Caco-2 (cell line): ENCODE measurements at regions of chr11 and their contacts with region 1.

Region 1: DNA sequence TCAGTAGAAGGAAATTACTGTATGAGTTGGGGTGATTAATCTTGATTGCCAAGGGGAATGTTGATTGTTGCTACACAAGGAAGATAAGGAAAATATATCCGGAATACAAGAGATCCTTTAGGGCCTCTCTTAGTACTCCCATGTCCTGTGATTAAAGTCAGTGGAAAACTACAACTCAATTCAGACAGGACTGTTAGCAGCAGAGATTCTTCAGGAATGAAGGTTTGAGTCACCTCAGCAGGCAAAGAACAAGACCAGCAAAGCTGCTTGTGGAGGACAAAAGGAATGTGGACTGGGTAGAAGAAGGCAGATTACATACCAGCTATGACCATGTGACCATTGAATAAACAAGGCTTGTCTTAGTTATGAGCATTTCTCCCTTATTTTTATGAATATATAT is 478.2 kb downstream of the BUD13 start:
- DNase-seq: peak; percentile 88 to 92
- H3K4me3 ChIP-seq: no peak overlapping the region
- H3K4me3 Mint-ChIP-seq: peak overlapping the region; percentile 70
- H3K27ac Mint-ChIP-seq: peak overlapping the region; percentile 96
- H3K4me1 ChIP-seq: peaks cover 49% of the 10 kb centered on the region
- H3K4me1 Mint-ChIP-seq: peaks cover 43% of the 10 kb centered on the region
- H3K27me3 ChIP-seq: no peaks in the 10 kb centered on the region
- H3K27me3 Mint-ChIP-seq: no peaks in the 10 kb centered on the region
- CTCF ChIP-seq: no peak

Region 2: DNA sequence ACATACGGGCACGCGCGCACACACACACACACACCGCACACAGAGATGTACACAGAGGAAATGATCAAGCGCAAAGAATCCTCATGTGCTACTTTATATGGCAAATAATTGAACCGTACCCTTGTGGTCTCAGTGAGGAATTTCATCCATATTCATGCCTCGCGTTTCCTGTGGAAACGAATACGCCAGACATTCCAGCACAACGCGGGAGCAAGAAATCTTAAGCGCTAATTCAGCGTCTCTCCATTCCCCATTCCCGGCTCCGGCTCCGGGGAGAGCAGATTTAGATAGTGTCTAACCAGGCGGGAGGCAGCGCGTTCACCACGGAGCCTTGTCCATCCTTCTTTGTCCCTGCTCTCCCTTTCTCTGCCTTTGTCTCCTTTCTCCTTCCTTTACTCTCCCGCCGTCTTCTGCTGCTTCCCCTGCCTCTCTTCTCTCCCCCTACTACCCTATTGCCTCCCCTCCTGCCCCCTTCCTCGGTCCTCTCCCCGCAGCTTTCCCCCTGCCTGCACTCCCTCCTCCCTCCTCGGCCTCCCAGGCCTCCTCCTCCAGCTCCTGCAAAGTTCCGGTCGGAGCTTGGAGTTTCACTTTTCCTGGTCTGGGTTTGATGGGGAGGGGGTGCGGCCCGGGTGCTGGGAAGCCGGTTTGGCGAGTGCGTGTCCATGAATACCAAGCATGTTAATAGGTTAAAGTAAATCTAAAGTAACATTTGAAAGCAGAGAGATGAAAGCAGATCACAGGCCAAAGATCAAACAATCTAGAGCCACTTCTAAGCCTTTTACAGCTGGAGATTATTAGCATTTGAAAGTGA is 101.1 kb before region 1 on chr11:
- CTCF ChIA-PET with region 1: no interaction called
- POLR2A ChIA-PET with region 1: interaction called, 10 read pairs
- intact Hi-C with region 1: no loop called
- DNase-seq: peak; percentile 99
- H3K4me3 ChIP-seq: peak overlapping the region; percentile 58
- H3K4me3 Mint-ChIP-seq: peak overlapping the region; percentile 68
- H3K27ac Mint-ChIP-seq: peak overlapping the region; percentile 51
- H3K4me1 ChIP-seq: peaks cover 36% of the 10 kb centered on the region
- H3K4me1 Mint-ChIP-seq: peaks cover 42% of the 10 kb centered on the region
- H3K27me3 ChIP-seq: no peaks in the 10 kb centered on the region
- H3K27me3 Mint-ChIP-seq: no peaks in the 10 kb centered on the region
- CTCF ChIP-seq: peak; percentile 35 to 51

Region 3: DNA sequence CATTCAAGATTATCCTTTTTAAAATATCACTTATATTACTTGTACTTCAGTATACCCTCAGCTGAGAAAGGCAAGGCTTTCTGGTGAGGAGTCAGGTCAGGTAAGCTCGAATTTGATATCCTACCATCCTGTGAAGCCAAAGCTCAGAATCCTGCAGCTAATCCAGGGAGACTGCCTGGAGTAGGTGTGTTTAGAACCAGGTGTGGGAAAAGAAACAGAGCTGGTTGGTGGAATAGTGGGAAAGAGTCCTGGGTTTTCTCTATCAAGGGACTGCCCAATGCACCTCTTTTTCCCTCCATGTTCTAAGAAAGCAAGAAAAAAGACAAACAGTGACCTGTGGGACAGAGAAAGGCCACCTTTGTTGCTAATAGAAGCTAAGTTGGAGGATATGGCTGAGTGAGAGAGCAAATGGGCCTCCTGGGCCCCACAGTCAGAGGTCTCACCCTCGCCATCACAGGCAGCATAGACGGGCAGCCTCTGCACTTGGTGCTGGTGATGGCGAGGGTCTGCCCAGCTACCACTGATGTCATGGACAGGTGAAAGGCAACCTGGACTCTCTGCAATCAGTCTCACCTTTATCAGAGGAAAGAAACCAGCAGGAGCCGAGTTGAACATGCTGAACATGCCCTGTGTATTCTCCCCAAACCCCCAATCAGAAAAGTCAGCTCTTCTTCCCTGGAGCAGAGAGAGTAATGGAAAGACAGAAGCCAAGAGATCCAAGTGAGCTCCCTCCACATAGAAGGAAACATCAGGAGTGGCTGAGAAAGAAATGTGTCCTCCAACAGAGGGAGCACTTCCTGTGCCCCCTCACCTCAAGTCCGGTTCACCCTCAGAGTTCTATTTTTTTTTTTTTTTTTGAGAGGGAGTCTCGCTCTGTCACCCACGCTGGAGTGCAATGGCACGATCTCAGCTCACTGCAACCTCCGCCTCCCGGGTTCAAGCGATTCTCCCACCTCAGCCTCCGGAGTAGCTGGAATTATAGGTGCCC is 13.2 kb before region 1 on chr11:
- CTCF ChIA-PET with region 1: interaction called, 15 read pairs
- POLR2A ChIA-PET with region 1: no interaction called
- intact Hi-C with region 1: loop called (anchors 2 kb)
- DNase-seq: no peak
- H3K4me3 ChIP-seq: no peak overlapping the region
- H3K4me3 Mint-ChIP-seq: no peak overlapping the region
- H3K27ac Mint-ChIP-seq: no peak overlapping the region
- H3K4me1 ChIP-seq: peaks cover 27% of the 10 kb centered on the region
- H3K4me1 Mint-ChIP-seq: peaks cover 7% of the 10 kb centered on the region
- H3K27me3 ChIP-seq: no peaks in the 10 kb centered on the region
- H3K27me3 Mint-ChIP-seq: no peaks in the 10 kb centered on the region
- CTCF ChIP-seq: peak; percentile 61 to 69

Region 4: DNA sequence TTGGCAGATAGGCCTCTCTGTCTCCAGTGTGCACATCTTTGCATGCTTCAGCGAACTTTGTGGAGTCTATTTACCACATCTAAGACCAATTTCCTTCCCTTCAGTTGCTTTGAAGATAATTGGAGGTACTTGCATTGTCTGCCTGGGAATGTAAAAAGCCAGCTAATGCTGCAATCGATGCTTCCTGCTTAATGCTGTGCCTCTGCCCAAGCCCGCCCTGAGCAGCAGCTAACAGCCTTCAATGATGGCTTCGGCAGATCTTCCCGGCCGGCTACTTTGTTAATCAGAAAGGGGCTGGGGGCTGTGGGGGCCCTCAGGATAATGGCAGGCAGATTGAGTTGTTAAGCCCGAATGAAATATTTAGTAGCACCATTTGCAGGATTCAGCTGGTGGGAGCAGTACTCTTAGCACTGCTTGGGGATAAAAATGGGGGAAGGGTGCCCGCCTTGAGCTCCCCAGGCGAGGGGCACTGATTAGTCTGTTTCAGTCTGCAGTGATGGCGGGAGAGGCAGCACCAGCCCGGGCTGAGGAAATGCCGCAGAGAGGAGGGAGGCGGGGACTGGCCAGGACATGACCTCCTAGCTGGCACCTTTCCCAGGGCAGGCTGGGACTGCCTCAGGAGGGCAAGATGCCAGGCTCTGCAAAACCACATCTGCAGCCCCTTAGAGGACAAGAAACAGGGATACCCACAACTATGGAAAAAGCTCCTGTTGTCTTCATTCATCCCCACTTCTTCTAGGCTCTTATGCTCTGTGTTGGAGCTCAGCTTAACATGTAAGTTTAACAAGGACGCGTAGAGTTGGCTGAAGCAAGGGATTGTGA is 18.1 kb after region 1 on chr11:
- CTCF ChIA-PET with region 1: no interaction called
- POLR2A ChIA-PET with region 1: no interaction called
- intact Hi-C with region 1: loop called (anchors 1 kb)
- DNase-seq: no peak
- H3K4me3 ChIP-seq: no peak overlapping the region
- H3K4me3 Mint-ChIP-seq: no peak overlapping the region
- H3K27ac Mint-ChIP-seq: no peak overlapping the region
- H3K4me1 ChIP-seq: no peaks in the 10 kb centered on the region
- H3K4me1 Mint-ChIP-seq: no peaks in the 10 kb centered on the region
- H3K27me3 ChIP-seq: no peaks in the 10 kb centered on the region
- H3K27me3 Mint-ChIP-seq: peaks cover 7% of the 10 kb centered on the region
- CTCF ChIP-seq: no peak

Region 5: DNA sequence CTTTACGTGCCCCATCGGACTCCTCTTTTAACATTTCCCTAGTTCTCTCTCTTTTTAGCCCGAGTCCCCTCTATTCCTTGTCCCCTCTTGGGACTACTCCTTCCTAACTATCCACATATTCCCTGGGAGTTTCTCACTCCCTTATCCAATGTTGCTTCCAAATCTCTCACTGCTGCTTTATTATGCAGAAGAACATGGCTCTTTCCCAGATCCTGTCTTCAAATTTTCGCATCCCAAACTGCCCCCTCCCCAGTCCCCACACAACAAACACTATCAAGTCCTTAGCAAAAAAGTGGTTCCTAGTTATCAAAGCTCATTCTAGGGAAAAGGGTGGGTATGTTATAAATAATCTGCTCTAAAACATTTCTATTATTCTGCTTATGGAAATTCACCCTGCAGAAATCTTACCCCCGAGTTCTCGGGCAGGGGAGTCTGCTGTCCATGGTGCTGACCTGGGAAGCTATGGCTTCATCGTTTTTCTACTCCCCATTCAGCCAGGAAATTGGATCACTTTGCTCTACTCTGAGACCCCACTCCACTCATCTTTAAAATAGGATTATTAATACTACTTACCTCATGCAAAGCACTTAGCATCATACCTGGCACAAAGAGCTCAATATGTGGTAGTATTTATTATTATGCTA is 84.7 kb after region 1 on chr11:
- CTCF ChIA-PET with region 1: no interaction called
- POLR2A ChIA-PET with region 1: no interaction called
- intact Hi-C with region 1: loop called (anchors 1 kb)
- DNase-seq: peak; percentile 57 to 87
- H3K4me3 ChIP-seq: no peak overlapping the region
- H3K4me3 Mint-ChIP-seq: no peak overlapping the region
- H3K27ac Mint-ChIP-seq: no peak overlapping the region
- H3K4me1 ChIP-seq: peaks cover 22% of the 10 kb centered on the region
- H3K4me1 Mint-ChIP-seq: peaks cover 17% of the 10 kb centered on the region
- H3K27me3 ChIP-seq: no peaks in the 10 kb centered on the region
- H3K27me3 Mint-ChIP-seq: peaks cover 19% of the 10 kb centered on the region
- CTCF ChIP-seq: no peak

Region 6: GRCh38 chr11:116427903-116428637 is 133.4 kb after region 1 on chr11:
- CTCF ChIA-PET with region 1: no interaction called
- POLR2A ChIA-PET with region 1: interaction called, 3 read pairs
- intact Hi-C with region 1: loop called (anchors 2 kb)
- DNase-seq: peak; percentile 81 to 92
- H3K4me3 ChIP-seq: no peak overlapping the region
- H3K4me3 Mint-ChIP-seq: peak overlapping the region; percentile 37
- H3K27ac Mint-ChIP-seq: peak overlapping the region; percentile 84
- H3K4me1 ChIP-seq: peaks cover 40% of the 10 kb centered on the region
- H3K4me1 Mint-ChIP-seq: peaks cover 29% of the 10 kb centered on the region
- H3K27me3 ChIP-seq: no peaks in the 10 kb centered on the region
- H3K27me3 Mint-ChIP-seq: no peaks in the 10 kb centered on the region
- CTCF ChIP-seq: no peak